MCF 10A (cell line): ENCODE measurements at regions of chr1 and their contacts with region 1.

Region 1: DNA sequence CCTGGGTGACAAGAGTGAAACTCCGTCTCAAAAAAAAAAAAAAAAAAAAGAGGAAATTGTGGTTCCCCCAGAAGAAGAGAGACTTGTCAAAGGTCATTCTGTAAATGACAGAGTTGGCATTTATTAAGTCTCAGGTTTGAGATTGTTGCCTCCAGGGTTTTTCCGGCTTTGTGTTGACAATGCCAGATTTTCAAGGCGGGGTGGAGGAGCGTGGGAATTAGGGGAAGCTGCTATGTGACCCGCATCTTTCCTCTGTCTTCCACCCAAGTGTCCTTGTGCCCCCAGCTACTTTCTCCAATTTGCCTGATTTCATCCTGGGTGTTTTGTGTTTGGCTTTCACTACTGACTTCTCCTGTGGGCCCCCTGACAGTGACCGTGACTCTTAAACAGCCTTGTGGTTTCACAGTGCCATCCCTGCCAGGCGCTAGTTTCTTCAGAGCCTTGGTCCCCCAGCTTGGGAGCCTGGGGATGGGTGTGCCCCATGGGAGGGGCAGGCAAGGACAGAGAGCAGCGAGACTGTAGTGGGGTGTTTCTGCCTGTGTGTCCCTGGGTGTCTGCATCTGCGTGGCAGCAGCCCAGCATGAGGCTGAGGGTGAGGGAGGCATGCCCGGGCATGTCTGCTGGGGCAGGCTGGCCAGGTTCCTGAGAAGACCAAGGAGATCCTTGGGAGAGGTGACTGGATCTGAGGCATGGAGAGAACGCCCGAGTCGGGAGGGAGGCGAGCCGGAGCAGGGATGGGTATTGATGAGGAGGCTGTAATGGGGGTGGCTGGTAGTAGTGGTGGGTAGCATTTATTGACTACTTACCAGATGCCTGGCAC is 46.3 kb downstream of the IER5 start:
- DNase-seq: peak; percentile 96
- H3K4me3 Mint-ChIP-seq: peak overlapping the region; percentile 71
- H3K27ac Mint-ChIP-seq: peak overlapping the region; percentile 100
- H3K4me1 Mint-ChIP-seq: peaks cover 53% of the 10 kb centered on the region
- H3K27me3 Mint-ChIP-seq: no peaks in the 10 kb centered on the region
- CTCF ChIP-seq: no peak

Region 2: DNA sequence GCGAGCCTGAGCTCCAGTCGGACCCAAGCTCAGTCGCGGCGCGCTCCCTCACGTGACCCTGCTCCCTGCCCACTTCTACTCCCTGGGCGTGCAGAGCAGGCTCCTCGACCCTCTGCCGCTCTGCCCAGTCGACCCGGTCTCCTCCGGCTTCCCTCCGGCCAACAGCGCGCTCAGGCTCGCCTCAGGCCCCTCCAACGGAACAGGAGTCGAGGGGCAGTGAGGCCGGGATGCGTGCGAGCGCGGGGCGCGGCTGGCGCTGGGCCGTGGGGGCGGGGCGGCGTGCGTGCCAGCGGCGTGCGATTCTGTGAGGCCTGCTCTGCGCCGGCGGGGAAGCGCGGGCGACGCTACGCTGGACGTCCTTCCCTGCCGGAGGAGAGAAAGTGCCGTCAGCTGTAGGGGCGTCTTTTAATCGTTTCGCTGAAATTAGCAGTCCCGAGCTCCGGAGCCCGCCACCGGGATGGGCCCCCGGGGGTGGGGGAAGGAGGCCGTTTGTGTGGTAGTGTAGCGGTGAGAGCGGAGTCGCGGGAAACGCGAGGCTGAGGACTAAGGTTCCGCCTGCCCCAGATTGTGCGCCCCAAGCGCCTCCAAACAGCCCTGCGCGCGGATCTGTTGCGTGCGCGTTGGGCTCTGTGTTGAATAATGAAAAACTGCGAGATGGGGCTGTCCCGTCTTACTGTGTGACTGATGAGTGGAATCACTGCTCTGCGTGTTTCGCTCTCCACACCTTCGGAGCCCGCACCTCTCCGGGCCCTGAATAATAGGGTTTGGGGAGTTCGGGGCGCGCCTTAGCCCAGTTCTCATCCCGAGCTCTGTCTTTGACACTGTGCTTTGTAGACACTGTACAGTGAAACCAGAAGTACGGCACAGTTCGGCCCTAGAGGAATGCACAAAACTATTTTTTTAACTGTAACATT is 632.1 kb before region 1 on chr1 and contains the start of gene ACBD6:
- CTCF ChIA-PET with region 1: interaction called, 3 read pairs
- POLR2A ChIA-PET with region 1: interaction called, 16 read pairs
- intact Hi-C with region 1: no loop called
- DNase-seq: peak; percentile 94
- H3K4me3 Mint-ChIP-seq: peak within 1 kb of the TSS; percentile 94
- H3K27ac Mint-ChIP-seq: peak within 1 kb of the TSS; percentile 97
- H3K4me1 Mint-ChIP-seq: peaks cover 29% of the 10 kb centered on the region
- H3K27me3 Mint-ChIP-seq: no peaks in the 10 kb centered on the region
- CTCF ChIP-seq: no peak
- total RNA-seq, gene ACBD6: 123 and 136 TPM in 2 replicates

Region 3: GRCh38 chr1:181044449-181044966 is 90.2 kb before region 1 on chr1:
- CTCF ChIA-PET with region 1: interaction called, 135 read pairs
- POLR2A ChIA-PET with region 1: interaction called, 45 read pairs
- intact Hi-C with region 1: no loop called
- DNase-seq: peak; percentile 99
- H3K4me3 Mint-ChIP-seq: peak overlapping the region; percentile 58
- H3K27ac Mint-ChIP-seq: peak overlapping the region; percentile 88
- H3K4me1 Mint-ChIP-seq: peaks cover 41% of the 10 kb centered on the region
- H3K27me3 Mint-ChIP-seq: no peaks in the 10 kb centered on the region
- CTCF ChIP-seq: no peak

Region 4: DNA sequence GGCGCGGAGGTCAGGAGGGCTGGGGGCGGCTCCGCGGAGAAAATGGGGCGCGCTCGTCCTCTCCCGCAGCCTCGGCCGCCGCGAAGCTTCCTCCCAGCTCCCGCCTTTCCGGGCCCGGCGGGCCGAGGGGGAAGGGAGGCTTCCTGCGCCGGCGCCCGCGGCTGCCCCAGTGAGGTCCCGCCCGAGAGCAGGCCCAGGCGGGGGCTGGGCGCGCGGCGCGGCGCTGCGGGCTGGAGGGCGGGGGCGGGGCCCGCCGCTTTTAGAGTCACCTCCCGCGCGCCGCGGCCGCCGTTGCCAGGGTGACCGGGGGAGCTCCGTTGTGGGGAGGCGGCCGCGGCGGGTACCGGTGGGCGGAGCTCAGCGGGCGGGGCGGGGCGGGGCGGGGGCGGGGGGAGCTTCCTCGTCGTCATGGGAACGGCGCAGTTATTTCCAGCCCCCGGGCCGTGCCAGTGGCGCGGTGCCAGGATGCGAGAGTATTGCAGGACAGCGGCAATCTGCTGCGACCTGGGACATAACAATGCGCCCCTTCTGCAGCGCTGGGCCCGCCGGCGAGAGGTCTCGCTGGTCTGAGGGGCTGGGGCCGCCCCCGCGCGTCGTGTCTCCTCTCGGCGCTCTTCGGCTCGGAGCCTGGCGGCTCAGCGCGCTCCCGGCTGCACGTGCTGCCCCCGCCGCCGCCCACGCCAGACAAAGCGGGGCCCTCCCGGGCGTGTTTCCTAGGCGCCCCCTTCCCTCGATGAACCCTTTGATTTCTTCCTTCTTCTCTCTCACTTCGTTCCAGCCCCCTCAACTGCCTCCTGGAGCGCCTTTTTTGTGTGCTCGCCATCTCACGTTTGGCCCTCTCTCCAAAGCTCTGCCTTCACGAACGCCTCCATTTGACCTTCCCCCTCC is 29.4 kb before region 1 on chr1:
- CTCF ChIA-PET with region 1: interaction called, 198 read pairs
- POLR2A ChIA-PET with region 1: interaction called, 1,402 read pairs
- intact Hi-C with region 1: loop called (anchors 1 kb)
- DNase-seq: peak; percentile 95
- H3K4me3 Mint-ChIP-seq: peak overlapping the region; percentile 65
- H3K27ac Mint-ChIP-seq: peak overlapping the region; percentile 22
- H3K4me1 Mint-ChIP-seq: peaks cover 61% of the 10 kb centered on the region
- H3K27me3 Mint-ChIP-seq: no peaks in the 10 kb centered on the region
- CTCF ChIP-seq: no peak

Region 5: DNA sequence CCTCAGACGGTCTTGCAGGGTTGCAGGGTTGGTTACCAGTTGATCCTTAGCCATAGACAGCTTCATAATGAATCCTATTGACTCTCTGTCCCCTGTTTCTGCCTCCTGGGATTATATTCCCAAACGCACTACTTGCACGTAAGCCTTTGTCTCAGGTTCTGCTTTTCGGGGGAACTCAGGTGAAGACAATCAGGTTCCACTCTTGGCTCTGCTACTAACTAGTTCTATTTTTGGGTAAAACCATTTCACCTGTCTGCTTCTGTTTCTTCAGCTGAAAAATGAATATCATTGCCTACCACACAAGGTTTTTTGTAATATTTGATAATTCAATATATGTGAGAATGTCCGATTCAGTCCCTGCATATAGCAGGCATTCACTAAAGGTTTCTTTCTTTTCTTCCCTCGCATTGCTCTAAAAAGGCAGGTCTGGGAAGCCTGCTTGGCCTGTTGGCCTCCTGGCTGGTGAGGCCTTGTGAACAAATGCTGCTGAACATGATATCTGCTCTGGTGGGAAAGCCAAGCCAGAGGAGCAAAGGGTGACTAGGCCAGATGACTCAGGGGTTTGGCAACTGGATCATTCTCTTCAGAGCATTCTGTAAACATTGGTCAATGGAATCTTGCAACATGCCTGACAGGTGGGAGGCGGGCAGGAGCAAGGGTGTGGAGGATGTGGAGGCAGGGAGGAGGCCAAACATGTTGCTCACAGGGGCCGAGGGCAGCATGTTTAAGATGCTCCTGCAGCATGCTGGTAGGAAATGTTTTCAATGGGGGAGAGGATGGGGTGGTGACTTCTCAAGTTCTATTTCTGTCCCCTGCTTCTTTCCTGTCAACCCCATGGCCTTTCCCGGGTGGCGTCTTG is 22.5 kb before region 1 on chr1:
- CTCF ChIA-PET with region 1: interaction called, 198 read pairs
- POLR2A ChIA-PET with region 1: interaction called, 1,402 read pairs
- intact Hi-C with region 1: loop called (anchors 1 kb)
- DNase-seq: peak; percentile 100
- H3K4me3 Mint-ChIP-seq: peak overlapping the region; percentile 48
- H3K27ac Mint-ChIP-seq: peak overlapping the region; percentile 86
- H3K4me1 Mint-ChIP-seq: peaks cover 51% of the 10 kb centered on the region
- H3K27me3 Mint-ChIP-seq: no peaks in the 10 kb centered on the region
- CTCF ChIP-seq: no peak

Region 6: GRCh38 chr1:181117638-181118449 is 16.9 kb before region 1 on chr1:
- CTCF ChIA-PET with region 1: interaction called, 13 read pairs
- POLR2A ChIA-PET with region 1: interaction called, 1,402 read pairs
- intact Hi-C with region 1: no loop called
- DNase-seq: peak; percentile 89
- H3K4me3 Mint-ChIP-seq: no peak overlapping the region
- H3K27ac Mint-ChIP-seq: peak overlapping the region; percentile 77
- H3K4me1 Mint-ChIP-seq: peaks cover 50% of the 10 kb centered on the region
- H3K27me3 Mint-ChIP-seq: no peaks in the 10 kb centered on the region
- CTCF ChIP-seq: no peak

Region 7: GRCh38 chr1:181152892-181153633 is 18.3 kb after region 1 on chr1:
- CTCF ChIA-PET with region 1: interaction called, 162 read pairs
- POLR2A ChIA-PET with region 1: interaction called, 12 read pairs
- intact Hi-C with region 1: no loop called
- DNase-seq: peak; percentile 28
- H3K4me3 Mint-ChIP-seq: no peak overlapping the region
- H3K27ac Mint-ChIP-seq: no peak overlapping the region
- H3K4me1 Mint-ChIP-seq: peaks cover 33% of the 10 kb centered on the region
- H3K27me3 Mint-ChIP-seq: no peaks in the 10 kb centered on the region
- CTCF ChIP-seq: no peak